Right lobe of liver (tissue), 6 donors: ENCODE measurements at regions of chr6 and their contacts with region 1.

Region 1: DNA sequence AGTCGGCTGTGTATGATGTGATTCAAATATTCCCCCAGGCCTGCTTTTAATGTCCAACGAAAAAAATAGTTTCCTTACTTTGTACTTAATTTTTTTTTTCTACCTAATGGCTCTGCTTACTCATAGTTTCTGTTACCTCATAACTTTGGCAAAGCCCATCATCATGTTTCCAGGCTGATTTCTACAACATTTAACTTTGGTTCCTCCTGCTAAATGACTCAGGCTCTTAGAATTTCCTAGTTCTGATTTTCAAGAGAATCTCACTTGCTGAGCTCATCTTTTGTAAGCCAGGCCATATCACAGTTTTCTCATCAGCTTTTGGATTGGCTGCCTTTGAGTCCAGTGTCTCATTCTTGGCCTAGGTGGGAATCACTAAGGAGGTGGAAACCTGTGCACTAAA is 323.1 kb downstream of the HDGFL1 start:
- DNase-seq: no peak
- ATAC-seq: peak in 1 of 4 donors; percentile 36
- H3K4me3 ChIP-seq: no peak overlapping the region
- H3K27ac ChIP-seq: no peak overlapping the region
- H3K4me1 ChIP-seq: no peaks in the 10 kb centered on the region
- H3K27me3 ChIP-seq: no peaks in the 10 kb centered on the region
- CTCF ChIP-seq: no peak
- POLR2A ChIP-seq: no peak

Region 2: DNA sequence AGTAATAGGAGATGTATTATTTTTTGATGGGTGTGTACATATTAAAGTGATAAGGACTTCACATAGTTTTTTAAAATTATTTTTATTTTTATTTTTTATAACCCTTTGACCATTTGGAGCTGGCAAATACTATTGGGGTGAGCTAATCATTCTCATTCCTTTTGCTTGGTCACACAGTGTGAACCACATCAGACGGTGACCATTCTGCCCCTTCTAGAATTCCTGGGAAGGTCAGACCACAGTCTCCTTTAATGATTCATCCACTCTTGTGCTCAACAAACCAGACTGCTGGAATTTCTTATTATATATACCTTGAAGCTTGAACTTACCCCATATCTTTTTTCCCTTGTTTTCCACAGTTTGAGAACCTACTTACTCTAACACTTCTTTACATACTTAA is 571.7 kb before region 1 on chr6:
- intact Hi-C with region 1: loop called in 1 of 2 experiments (anchors 10 kb)
- DNase-seq: no peak
- ATAC-seq: no peak
- H3K4me3 ChIP-seq: no peak overlapping the region
- H3K27ac ChIP-seq: no peak overlapping the region
- H3K4me1 ChIP-seq: no peaks in the 10 kb centered on the region
- H3K27me3 ChIP-seq: no peaks in the 10 kb centered on the region
- CTCF ChIP-seq: no peak
- POLR2A ChIP-seq: no peak

Region 3: GRCh38 chr6:22727710-22728109 is 164.7 kb before region 1 on chr6:
- intact Hi-C with region 1: no loop called
- DNase-seq: no peak
- ATAC-seq: no peak
- H3K4me3 ChIP-seq: no peak overlapping the region
- H3K27ac ChIP-seq: no peak overlapping the region
- H3K4me1 ChIP-seq: no peaks in the 10 kb centered on the region
- H3K27me3 ChIP-seq: no peaks in the 10 kb centered on the region
- CTCF ChIP-seq: no peak
- POLR2A ChIP-seq: no peak

Region 4: DNA sequence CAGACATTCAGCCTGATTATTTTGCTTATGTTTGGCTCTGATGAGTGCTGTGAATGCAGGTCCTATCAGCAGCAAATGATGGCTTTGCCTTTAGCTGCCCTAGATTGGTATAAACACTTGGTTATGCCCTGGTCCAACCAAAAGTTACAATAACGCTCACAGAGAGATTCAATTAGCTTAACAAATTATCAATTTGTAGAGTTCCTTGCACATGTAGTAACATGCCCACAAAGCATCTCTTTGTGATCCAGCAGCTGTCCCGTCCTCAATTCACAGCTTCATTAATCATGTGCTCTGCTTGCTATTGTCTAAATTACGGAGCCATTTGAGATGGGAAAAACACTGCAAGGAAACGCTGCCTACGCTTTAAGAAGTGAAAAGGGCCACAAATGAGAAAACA is 134.8 kb after region 1 on chr6:
- intact Hi-C with region 1: no loop called
- DNase-seq: no peak
- ATAC-seq: no peak
- H3K4me3 ChIP-seq: no peak overlapping the region
- H3K27ac ChIP-seq: no peak overlapping the region
- H3K4me1 ChIP-seq: no peaks in the 10 kb centered on the region
- H3K27me3 ChIP-seq: no peaks in the 10 kb centered on the region
- CTCF ChIP-seq: no peak
- POLR2A ChIP-seq: no peak